CD4-positive, alpha-beta T cell (primary cell): ENCODE measurements at regions of chr13 and their contacts with region 1.

Region 1: GRCh38 chr13:41465241-41465847 is 8.0 kb downstream of the RGCC start:
- DNase-seq: peak; percentile 78 to 96 (median 85)
- ATAC-seq: peak; percentile 67
- H3K4me3 ChIP-seq: peak overlapping the region; percentile 48
- H3K4me3 Mint-ChIP-seq: peak overlapping the region; percentile 94
- H3K27ac ChIP-seq: peak overlapping the region; percentile 92 to 93
- H3K27ac Mint-ChIP-seq: peak overlapping the region; percentile 98
- H3K4me1 ChIP-seq: peaks cover 77% of the 10 kb centered on the region
- H3K4me1 Mint-ChIP-seq: peaks cover 96% of the 10 kb centered on the region
- H3K27me3 ChIP-seq: no peaks in the 10 kb centered on the region
- H3K27me3 Mint-ChIP-seq: peaks cover 3% of the 10 kb centered on the region
- CTCF ChIP-seq: no peak

Region 2: GRCh38 chr13:41352935-41353840 is 112.2 kb before region 1 on chr13:
- CTCF ChIA-PET with region 1: no interaction called
- POLR2A ChIA-PET with region 1: interaction called, 27 read pairs
- intact Hi-C with region 1: no loop called
- DNase-seq: peak; percentile 15 to 85 (median 46)
- ATAC-seq: peak; percentile 51
- H3K4me3 ChIP-seq: no peak overlapping the region
- H3K4me3 Mint-ChIP-seq: peak overlapping the region; percentile 44
- H3K27ac ChIP-seq: peak overlapping the region; percentile 25 to 56
- H3K27ac Mint-ChIP-seq: peak overlapping the region; percentile 72
- H3K4me1 ChIP-seq: peaks cover 34% of the 10 kb centered on the region
- H3K4me1 Mint-ChIP-seq: peaks cover 57% of the 10 kb centered on the region
- H3K27me3 ChIP-seq: no peaks in the 10 kb centered on the region
- H3K27me3 Mint-ChIP-seq: no peaks in the 10 kb centered on the region
- CTCF ChIP-seq: peak; percentile 76

Region 3: GRCh38 chr13:41492404-41493260 is 27.3 kb after region 1 on chr13:
- CTCF ChIA-PET with region 1: interaction called, 49 read pairs
- POLR2A ChIA-PET with region 1: interaction called, 61 read pairs
- intact Hi-C with region 1: loop called (anchors 2 to 5 kb)
- DNase-seq: peak in 9 of 14 experiments; percentile 17 to 79 (median 32)
- ATAC-seq: peak; percentile 80
- H3K4me3 ChIP-seq: peak overlapping the region; percentile 6
- H3K4me3 Mint-ChIP-seq: peak overlapping the region; percentile 81
- H3K27ac ChIP-seq: peak overlapping the region; percentile 86 to 94
- H3K27ac Mint-ChIP-seq: peak overlapping the region; percentile 100
- H3K4me1 ChIP-seq: peaks cover 66% of the 10 kb centered on the region
- H3K4me1 Mint-ChIP-seq: peaks cover 91% of the 10 kb centered on the region
- H3K27me3 ChIP-seq: no peaks in the 10 kb centered on the region
- H3K27me3 Mint-ChIP-seq: no peaks in the 10 kb centered on the region
- CTCF ChIP-seq: no peak

Region 4: GRCh38 chr13:41543664-41544300 is 78.4 kb after region 1 on chr13:
- CTCF ChIA-PET with region 1: no interaction called
- POLR2A ChIA-PET with region 1: interaction called, 5 read pairs
- intact Hi-C with region 1: loop called in 1 of 2 experiments (anchors 5 kb)
- DNase-seq: no peak
- ATAC-seq: no peak
- H3K4me3 ChIP-seq: no peak overlapping the region
- H3K4me3 Mint-ChIP-seq: no peak overlapping the region
- H3K27ac ChIP-seq: no peak overlapping the region
- H3K27ac Mint-ChIP-seq: no peak overlapping the region
- H3K4me1 ChIP-seq: peaks cover 13% of the 10 kb centered on the region
- H3K4me1 Mint-ChIP-seq: peaks cover 30% of the 10 kb centered on the region
- H3K27me3 ChIP-seq: no peaks in the 10 kb centered on the region
- H3K27me3 Mint-ChIP-seq: no peaks in the 10 kb centered on the region
- CTCF ChIP-seq: no peak

Region 5: GRCh38 chr13:41588899-41589298 is 123.6 kb after region 1 on chr13:
- CTCF ChIA-PET with region 1: interaction called, 3 read pairs
- POLR2A ChIA-PET with region 1: interaction called, 6 read pairs
- intact Hi-C with region 1: loop called (anchors 5 kb)
- DNase-seq: peak in 3 of 14 experiments; percentile 15 to 52 (median 39)
- ATAC-seq: no peak
- H3K4me3 ChIP-seq: no peak overlapping the region
- H3K4me3 Mint-ChIP-seq: no peak overlapping the region
- H3K27ac ChIP-seq: no peak overlapping the region
- H3K27ac Mint-ChIP-seq: no peak overlapping the region
- H3K4me1 ChIP-seq: peaks cover 3% of the 10 kb centered on the region
- H3K4me1 Mint-ChIP-seq: no peaks in the 10 kb centered on the region
- H3K27me3 ChIP-seq: no peaks in the 10 kb centered on the region
- H3K27me3 Mint-ChIP-seq: no peaks in the 10 kb centered on the region
- CTCF ChIP-seq: no peak

Region 6: DNA sequence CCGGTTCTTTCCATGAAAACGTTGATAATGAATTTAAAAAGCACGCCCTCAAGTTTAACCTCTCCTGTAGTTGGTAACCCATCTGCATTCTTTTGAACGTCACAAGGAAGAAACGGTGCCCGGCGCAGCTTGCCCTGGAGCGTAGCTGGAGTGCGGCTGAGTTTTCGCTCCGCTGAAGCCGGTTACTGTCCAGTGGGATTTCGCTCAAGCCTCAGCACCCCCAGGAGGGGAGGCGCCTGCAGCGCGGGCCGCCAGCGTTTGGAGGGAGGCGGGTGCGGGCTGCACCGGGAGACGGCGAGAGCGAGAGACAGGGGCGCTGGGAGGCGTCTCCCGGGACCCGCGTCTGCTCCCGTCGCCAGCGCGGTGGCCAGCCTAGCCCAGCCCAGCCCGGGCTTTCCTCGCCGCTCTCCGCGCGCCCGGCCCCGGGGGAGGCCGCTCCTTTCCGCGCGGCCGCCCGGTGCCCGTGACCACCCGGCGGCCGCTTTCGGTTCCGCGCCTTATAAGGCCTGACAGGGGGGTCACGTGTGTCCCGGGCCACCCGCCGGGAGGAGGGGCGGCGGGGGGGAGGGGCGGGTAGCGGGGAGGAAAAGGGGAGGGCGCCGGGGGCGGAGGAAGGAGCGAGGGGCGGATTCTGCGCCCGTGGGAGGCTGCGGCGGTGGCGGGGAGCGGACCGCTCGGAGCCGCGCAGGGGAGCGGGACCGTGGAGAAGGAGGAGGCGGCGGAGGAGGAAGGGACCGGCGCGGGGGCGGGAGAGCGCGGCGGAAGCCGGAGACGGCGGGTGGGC is 574.8 kb after region 1 on chr13:
- CTCF ChIA-PET with region 1: no interaction called
- POLR2A ChIA-PET with region 1: no interaction called
- intact Hi-C with region 1: loop called in 1 of 2 experiments (anchors 10 kb)
- DNase-seq: peak; percentile 75 to 96 (median 88)
- ATAC-seq: peak; percentile 82
- H3K4me3 ChIP-seq: peak overlapping the region; percentile 83
- H3K4me3 Mint-ChIP-seq: peak overlapping the region; percentile 87
- H3K27ac ChIP-seq: peak overlapping the region; percentile 53 to 68
- H3K27ac Mint-ChIP-seq: peak overlapping the region; percentile 85
- H3K4me1 ChIP-seq: peaks cover 20% of the 10 kb centered on the region
- H3K4me1 Mint-ChIP-seq: peaks cover 19% of the 10 kb centered on the region
- H3K27me3 ChIP-seq: no peaks in the 10 kb centered on the region
- H3K27me3 Mint-ChIP-seq: no peaks in the 10 kb centered on the region
- CTCF ChIP-seq: no peak